ENCODE measurements at regions of chr15 and their contacts with region 1.

Region 1: GRCh38 chr15:48861813-48862431 is 16.0 kb upstream of the EID1 start:
- DNase-seq: peak; percentile 57
- ATAC-seq: peak; percentile 73
- H3K4me3 ChIP-seq: no peak overlapping the region
- H3K27ac ChIP-seq: no peak overlapping the region
- H3K4me1 ChIP-seq: peaks cover 9% of the 10 kb centered on the region
- H3K27me3 ChIP-seq: no peaks in the 10 kb centered on the region; a peak in 2 of 5 replicates
- CTCF ChIP-seq: peak; percentile 74
- EP300 ChIP-seq: no peak
- POLR2A ChIP-seq: no peak
- RAD21 ChIP-seq: peak; percentile 61

Region 2: GRCh38 chr15:48520376-48521155 is 341.4 kb before region 1 on chr15:
- CTCF ChIA-PET with region 1: no interaction called
- POLR2A ChIA-PET with region 1: no interaction called
- in situ Hi-C with region 1: no loop called
- intact Hi-C with region 1: no loop called
- DNase-seq: peak; percentile 6
- ATAC-seq: peak; percentile 90
- H3K4me3 ChIP-seq: no peak overlapping the region
- H3K27ac ChIP-seq: no peak overlapping the region
- H3K4me1 ChIP-seq: no peaks in the 10 kb centered on the region
- H3K27me3 ChIP-seq: no peaks in the 10 kb centered on the region
- CTCF ChIP-seq: peak; percentile 58
- EP300 ChIP-seq: no peak
- POLR2A ChIP-seq: no peak
- RAD21 ChIP-seq: peak; percentile 51; the same call in 1 of the 2 replicates

Region 3: GRCh38 chr15:48766196-48766595 is 95.7 kb before region 1 on chr15:
- CTCF ChIA-PET with region 1: no interaction called
- POLR2A ChIA-PET with region 1: no interaction called
- in situ Hi-C with region 1: no loop called
- intact Hi-C with region 1: no loop called
- DNase-seq: no peak
- ATAC-seq: no peak
- H3K4me3 ChIP-seq: no peak overlapping the region
- H3K27ac ChIP-seq: no peak overlapping the region
- H3K4me1 ChIP-seq: peaks cover 9% of the 10 kb centered on the region
- H3K27me3 ChIP-seq: no peaks in the 10 kb centered on the region
- CTCF ChIP-seq: no peak
- EP300 ChIP-seq: no peak
- POLR2A ChIP-seq: no peak
- RAD21 ChIP-seq: no peak

Region 4: DNA sequence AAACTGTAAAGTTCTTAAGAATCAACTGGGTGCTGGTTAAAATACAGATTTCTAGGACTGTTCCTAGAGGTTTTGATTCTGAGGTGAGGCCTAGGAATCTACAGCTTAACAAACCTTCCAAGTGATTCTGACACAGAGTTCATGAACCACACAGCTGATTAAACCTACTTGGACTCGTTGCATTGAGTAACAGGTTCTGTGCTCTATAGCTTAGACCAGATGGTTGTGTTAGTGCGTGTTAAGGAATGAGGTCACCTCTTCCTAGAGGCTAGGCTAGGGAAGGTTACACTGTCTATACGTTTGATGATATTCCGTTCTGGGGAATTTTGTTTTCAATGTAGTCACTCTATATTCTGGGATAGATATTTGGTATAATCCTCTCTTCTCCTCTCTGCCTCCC is 37.9 kb after region 1 on chr15:
- CTCF ChIA-PET with region 1: no interaction called
- POLR2A ChIA-PET with region 1: no interaction called
- in situ Hi-C with region 1: no loop called
- intact Hi-C with region 1: no loop called
- DNase-seq: no peak
- ATAC-seq: no peak
- H3K4me3 ChIP-seq: no peak overlapping the region
- H3K27ac ChIP-seq: no peak overlapping the region
- H3K4me1 ChIP-seq: peaks cover 15% of the 10 kb centered on the region; the same call in 1 of the 2 replicates
- H3K27me3 ChIP-seq: no peaks in the 10 kb centered on the region
- CTCF ChIP-seq: no peak
- EP300 ChIP-seq: no peak
- POLR2A ChIP-seq: no peak
- RAD21 ChIP-seq: no peak

Region 5: DNA sequence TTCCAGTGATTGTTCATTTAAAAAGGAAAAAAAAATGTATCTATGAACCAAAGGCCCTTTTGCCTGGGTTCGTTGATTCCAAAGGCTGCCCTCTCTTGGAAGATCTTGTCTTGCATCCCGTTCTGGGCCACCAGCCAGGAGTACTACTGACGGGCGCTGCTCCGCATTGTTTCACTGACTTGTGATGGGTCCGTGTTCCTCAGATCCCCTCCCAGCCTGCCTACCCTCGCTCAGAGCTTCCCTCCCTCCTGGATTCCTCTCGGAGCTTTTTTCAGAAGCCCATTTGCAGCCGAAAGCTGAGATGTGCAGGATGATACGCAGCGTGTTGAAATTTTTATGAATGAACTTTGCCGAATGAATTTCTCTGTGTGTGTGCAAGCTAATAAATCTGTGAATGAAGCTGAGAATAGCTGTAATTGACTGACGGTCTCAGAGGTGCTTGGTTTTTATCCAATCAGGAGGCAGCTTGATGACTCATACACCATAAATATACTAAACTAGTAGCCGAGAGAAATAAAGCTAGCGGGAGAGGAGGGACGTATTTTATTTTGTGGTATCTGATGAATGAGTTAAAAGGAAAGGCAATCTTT is 101.7 kb after region 1 on chr15 and contains the start of gene SHC4:
- CTCF ChIA-PET with region 1: no interaction called
- POLR2A ChIA-PET with region 1: no interaction called
- in situ Hi-C with region 1: loop called (anchors 5 kb)
- intact Hi-C with region 1: no loop called
- DNase-seq: peak; percentile 24
- ATAC-seq: peak; percentile 83
- H3K4me3 ChIP-seq: peak within 1 kb of the TSS; percentile 5 to 65 (median 29); a peak in 4 of 6 replicates
- H3K27ac ChIP-seq: no peak within 1 kb of the TSS
- H3K4me1 ChIP-seq: peaks cover 17% of the 10 kb centered on the region; the same call in 1 of the 2 replicates
- H3K27me3 ChIP-seq: peaks cover 3 to 53% of the 10 kb centered on the region in 2 experiments; a peak in 3 of 5 replicates
- CTCF ChIP-seq: peak; percentile 37
- EP300 ChIP-seq: no peak
- POLR2A ChIP-seq: no peak
- RAD21 ChIP-seq: no peak
- total RNA-seq, gene SHC4: 0.04 TPM in 2 replicates

Region 6: DNA sequence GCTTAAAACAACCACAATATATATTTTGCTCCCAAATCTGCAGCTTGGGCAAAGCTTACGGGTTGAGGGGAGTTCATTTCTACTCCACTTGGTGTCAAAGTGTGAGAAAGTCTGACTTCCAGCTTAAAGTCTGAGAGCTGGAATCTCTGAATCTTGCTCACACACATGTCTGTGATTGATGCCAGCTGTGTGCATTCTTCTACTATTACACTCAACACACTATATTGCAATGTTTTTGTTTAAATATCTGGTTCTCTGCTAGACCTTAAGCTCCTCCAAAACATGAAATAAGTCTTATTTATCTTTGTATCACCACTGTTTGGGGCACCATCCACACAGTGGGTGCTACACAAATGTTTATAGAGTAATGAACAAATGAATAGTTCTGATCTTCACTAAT is 221.0 kb after region 1 on chr15:
- CTCF ChIA-PET with region 1: no interaction called
- POLR2A ChIA-PET with region 1: no interaction called
- in situ Hi-C with region 1: loop called (anchors 25 kb)
- intact Hi-C with region 1: no loop called
- DNase-seq: no peak
- ATAC-seq: no peak
- H3K4me3 ChIP-seq: no peak overlapping the region
- H3K27ac ChIP-seq: no peak overlapping the region
- H3K4me1 ChIP-seq: peaks cover 8% of the 10 kb centered on the region; the same call in 1 of the 2 replicates
- H3K27me3 ChIP-seq: no peaks in the 10 kb centered on the region
- CTCF ChIP-seq: no peak
- EP300 ChIP-seq: no peak
- POLR2A ChIP-seq: no peak
- RAD21 ChIP-seq: no peak

Region 7: DNA sequence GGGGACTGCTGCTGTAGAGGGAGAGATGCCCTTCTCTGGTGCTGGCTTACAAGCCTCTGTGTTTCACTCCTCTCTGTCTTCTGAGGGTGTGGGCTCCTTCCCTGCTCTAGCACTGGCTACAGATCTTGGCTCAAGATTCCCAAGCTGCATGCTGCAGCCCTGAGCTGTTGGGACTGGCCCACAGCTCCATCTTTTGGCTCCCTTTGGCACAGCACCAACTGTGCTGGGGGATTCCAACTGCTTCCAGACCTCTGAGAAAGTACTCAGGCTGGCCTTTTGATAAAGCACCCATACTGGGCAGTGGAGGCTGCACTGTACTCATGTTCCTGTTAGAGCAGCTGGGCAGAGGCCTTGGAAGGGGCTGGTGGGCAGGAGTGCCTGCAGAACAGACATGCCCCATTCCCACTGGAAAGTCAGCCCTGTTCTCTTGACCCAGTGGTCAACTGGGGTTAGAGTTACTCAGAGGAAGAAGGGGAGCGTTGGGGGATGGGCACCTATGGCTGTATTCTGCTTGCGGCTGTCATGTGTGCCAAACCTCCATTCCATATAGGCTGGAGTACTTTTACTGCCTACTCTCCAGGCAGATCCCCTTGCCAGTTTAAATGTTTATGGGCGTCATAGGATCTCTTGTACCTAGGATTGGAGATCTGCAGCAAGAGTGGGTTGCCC is 363.8 kb after region 1 on chr15:
- CTCF ChIA-PET with region 1: no interaction called
- POLR2A ChIA-PET with region 1: no interaction called
- in situ Hi-C with region 1: loop called (anchors 5 kb)
- intact Hi-C with region 1: loop called (anchors 2 kb)
- DNase-seq: no peak
- ATAC-seq: peak; percentile 95
- H3K4me3 ChIP-seq: no peak overlapping the region
- H3K27ac ChIP-seq: no peak overlapping the region
- H3K4me1 ChIP-seq: no peaks in the 10 kb centered on the region
- H3K27me3 ChIP-seq: no peaks in the 10 kb centered on the region
- CTCF ChIP-seq: peak; percentile 67
- EP300 ChIP-seq: no peak
- POLR2A ChIP-seq: no peak
- RAD21 ChIP-seq: peak; percentile 54

Region 8: DNA sequence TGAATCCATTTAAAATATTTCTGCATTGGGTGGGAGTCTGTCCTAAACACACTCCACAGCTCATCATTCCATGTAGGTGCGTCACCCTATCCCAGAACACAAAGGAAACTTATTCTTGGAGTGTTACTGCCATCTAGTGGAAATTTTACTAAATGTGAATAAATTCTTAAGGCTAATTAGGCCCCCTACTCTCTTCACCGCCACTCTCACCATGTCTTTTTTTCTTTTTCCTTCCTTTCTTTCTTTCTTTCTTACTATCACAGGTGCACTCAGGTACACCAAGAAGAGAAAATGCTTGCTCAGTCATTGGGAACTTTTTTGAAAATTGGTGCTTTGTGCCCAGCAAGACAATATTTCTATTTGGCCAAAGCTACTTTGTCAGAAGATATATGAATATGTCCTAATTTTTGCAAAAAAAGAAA is 1283.5 kb after region 1 on chr15:
- CTCF ChIA-PET with region 1: interaction called, 6 read pairs
- POLR2A ChIA-PET with region 1: no interaction called
- in situ Hi-C with region 1: loop called (anchors 10 kb)
- intact Hi-C with region 1: loop called (anchors 5 kb)
- DNase-seq: peak; percentile 78
- ATAC-seq: peak; percentile 89
- H3K4me3 ChIP-seq: peak overlapping the region in 2 of 3 experiments; percentile 31 to 36; a peak in 2 of 6 replicates
- H3K27ac ChIP-seq: no peak overlapping the region
- H3K4me1 ChIP-seq: peaks cover 16% of the 10 kb centered on the region
- H3K27me3 ChIP-seq: no peaks in the 10 kb centered on the region
- CTCF ChIP-seq: peak; percentile 75
- EP300 ChIP-seq: no peak
- POLR2A ChIP-seq: no peak
- RAD21 ChIP-seq: peak; percentile 38; the same call in 1 of the 2 replicates